ENCODE measurements at regions of chr16 and their contacts with region 1.

Region 1: DNA sequence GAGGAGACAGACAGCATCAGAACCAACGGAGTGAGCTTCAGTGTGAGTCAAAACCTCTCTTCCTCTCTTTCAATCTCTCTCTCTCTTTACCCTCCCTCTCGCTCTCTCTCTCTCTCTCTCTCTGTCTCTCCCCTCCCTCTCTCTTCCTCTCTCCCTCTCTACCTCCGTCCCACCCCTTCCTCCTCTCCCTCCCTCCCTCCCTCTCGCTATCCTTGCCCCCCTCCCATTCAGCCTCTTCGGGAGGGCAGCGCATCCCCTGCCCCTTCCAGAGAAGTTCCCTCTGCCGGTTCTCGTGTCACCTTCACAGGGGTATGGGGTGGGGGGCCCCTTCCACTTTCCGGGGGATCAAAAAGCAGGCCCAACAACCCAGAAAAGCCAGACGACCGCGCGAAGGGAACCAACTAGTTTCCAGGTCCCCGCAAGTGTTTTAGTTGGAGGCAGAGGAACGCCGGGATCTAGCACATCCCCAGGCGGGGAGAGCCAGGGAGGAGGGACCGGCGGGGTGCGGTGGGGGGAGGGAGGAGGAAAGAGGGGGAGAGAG is 28.9 kb upstream of the RBFOX1 start:
- DNase-seq: no peak
- H3K4me3 ChIP-seq: peak overlapping the region in 1 of 4 donors; percentile 7
- H3K27ac ChIP-seq: no peak overlapping the region
- H3K4me1 ChIP-seq: no peaks in the 10 kb centered on the region
- H3K27me3 ChIP-seq: peaks cover 26% of the 10 kb centered on the region
- CTCF ChIP-seq: no peak
- EP300 ChIP-seq: no peak
- POLR2A ChIP-seq: no peak

Region 2: DNA sequence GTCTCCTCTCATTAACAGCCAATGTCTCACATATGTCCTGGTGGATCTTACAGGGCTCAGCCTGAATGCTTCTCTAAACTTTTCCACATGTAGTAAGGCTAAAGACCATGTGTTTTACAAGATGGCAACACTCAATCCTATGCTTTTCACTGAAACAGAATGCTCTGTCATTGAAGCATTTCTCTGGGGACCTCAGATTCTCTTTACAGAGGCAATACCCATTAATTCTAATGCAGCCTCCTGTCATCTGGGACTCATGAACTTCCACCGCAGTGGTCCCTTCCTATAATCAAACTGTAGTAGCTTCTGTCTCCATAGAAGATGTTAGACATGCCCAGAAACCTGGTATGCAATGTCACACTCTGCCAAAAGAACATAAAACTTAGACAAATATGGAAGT is 897.7 kb before region 1 on chr16:
- in situ Hi-C with region 1: no loop called
- intact Hi-C with region 1: no loop called
- DNase-seq: no peak
- H3K4me3 ChIP-seq: no peak overlapping the region
- H3K27ac ChIP-seq: no peak overlapping the region
- H3K4me1 ChIP-seq: no peaks in the 10 kb centered on the region
- H3K27me3 ChIP-seq: no peaks in the 10 kb centered on the region
- CTCF ChIP-seq: no peak
- EP300 ChIP-seq: no peak
- POLR2A ChIP-seq: no peak

Region 3: GRCh38 chr16:6977916-6978315 is 325.8 kb before region 1 on chr16:
- in situ Hi-C with region 1: no loop called
- intact Hi-C with region 1: no loop called
- DNase-seq: no peak
- H3K4me3 ChIP-seq: no peak overlapping the region
- H3K27ac ChIP-seq: no peak overlapping the region
- H3K4me1 ChIP-seq: no peaks in the 10 kb centered on the region
- H3K27me3 ChIP-seq: no peaks in the 10 kb centered on the region
- CTCF ChIP-seq: no peak
- EP300 ChIP-seq: no peak
- POLR2A ChIP-seq: no peak

Region 4: DNA sequence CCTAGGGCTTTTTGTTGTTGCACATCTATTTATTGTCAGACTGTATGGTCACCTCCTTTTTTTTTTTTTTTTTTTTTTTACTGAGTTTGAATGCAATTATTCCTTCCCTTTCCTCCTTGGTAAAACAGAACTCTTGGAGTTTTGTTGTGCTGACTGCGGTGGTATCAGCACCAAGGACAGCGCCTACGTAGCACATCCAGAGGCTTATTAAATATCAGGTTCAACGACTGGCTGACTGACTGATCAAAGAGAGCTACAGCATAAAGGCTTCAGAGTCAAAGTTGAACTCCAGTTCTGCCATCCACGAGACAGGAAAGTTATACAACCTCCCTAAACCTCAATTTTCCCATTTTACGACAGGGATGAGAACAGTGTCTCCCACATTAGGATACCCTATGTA is 57.2 kb before region 1 on chr16:
- in situ Hi-C with region 1: no loop called
- intact Hi-C with region 1: loop called (anchors 2 kb)
- DNase-seq: no peak
- H3K4me3 ChIP-seq: no peak overlapping the region
- H3K27ac ChIP-seq: no peak overlapping the region
- H3K4me1 ChIP-seq: no peaks in the 10 kb centered on the region
- H3K27me3 ChIP-seq: no peaks in the 10 kb centered on the region
- CTCF ChIP-seq: no peak
- EP300 ChIP-seq: no peak
- POLR2A ChIP-seq: no peak

Region 5: DNA sequence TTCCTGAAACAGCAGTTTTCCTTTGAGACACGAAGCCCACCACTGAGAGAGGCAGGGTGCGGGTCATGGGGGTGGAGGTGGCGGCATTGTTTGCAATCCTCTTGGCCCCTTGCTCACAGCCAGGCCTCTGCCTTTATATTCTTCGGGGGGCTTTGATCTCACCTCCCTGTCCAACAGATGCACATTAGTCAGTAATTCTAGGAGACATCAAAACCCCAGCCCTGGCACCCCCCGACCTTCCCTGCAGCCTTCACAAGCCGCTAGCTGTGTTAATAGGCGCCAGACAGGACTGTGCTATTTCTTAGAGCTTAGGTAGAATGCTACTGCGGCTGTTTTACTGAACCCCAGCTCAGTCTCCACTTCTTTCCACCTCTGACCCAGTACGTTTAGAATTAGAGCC is 241.5 kb after region 1 on chr16:
- in situ Hi-C with region 1: no loop called
- intact Hi-C with region 1: no loop called
- DNase-seq: no peak
- H3K4me3 ChIP-seq: no peak overlapping the region
- H3K27ac ChIP-seq: no peak overlapping the region
- H3K4me1 ChIP-seq: no peaks in the 10 kb centered on the region
- H3K27me3 ChIP-seq: no peaks in the 10 kb centered on the region
- CTCF ChIP-seq: no peak
- EP300 ChIP-seq: no peak
- POLR2A ChIP-seq: no peak